ENCODE measurements at regions of chr10 and their contacts with region 1.

Region 1: DNA sequence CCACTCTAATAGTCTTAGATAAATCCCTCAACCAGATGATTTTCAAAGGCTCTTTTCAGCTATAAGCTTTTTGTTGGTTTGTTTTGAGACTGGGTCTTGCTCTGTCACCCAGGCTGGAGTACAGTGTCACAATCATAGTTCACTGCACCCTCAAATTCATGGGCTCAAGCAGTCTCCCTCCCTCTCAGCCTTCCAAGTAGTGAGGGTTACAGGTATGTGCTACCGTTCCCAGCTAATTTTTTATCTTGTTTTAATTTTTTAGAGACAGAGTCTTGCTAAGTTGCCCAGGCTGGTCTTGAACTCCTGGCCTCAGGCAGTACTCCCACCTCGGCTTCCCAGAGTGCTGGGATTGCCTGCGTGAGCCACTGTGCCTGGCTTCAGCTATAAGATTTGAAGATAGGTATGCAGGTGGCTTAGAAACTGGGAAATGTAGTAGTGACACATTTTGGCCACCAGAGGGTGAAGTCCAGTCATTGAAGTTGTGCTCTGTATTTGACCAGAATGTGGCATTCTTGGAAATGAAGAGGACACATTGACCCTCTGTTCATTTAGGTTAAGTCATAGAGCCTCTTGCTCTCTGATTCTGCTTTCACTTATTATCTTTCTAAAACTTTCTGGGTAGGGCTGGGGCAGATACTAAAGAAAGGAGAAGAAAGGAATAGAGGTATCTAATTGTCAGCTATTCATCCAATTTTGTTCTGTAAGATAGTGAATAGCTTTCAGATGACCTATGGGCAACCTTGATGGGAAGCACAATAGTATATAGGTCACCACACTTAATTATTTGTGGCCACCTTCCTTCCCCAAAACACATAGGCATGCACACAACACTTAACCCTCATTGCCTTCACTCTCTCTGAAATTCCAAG is 36.0 kb downstream of the R3HCC1L start:
- DNase-seq: no peak
- H3K4me3 ChIP-seq: no peak overlapping the region
- H3K27ac ChIP-seq: no peak overlapping the region
- H3K4me1 ChIP-seq: peaks cover 23% of the 10 kb centered on the region
- H3K27me3 ChIP-seq: no peaks in the 10 kb centered on the region
- CTCF ChIP-seq: peak; percentile 69 to 75 (median 74)
- POLR2A ChIP-seq: no peak

Region 2: DNA sequence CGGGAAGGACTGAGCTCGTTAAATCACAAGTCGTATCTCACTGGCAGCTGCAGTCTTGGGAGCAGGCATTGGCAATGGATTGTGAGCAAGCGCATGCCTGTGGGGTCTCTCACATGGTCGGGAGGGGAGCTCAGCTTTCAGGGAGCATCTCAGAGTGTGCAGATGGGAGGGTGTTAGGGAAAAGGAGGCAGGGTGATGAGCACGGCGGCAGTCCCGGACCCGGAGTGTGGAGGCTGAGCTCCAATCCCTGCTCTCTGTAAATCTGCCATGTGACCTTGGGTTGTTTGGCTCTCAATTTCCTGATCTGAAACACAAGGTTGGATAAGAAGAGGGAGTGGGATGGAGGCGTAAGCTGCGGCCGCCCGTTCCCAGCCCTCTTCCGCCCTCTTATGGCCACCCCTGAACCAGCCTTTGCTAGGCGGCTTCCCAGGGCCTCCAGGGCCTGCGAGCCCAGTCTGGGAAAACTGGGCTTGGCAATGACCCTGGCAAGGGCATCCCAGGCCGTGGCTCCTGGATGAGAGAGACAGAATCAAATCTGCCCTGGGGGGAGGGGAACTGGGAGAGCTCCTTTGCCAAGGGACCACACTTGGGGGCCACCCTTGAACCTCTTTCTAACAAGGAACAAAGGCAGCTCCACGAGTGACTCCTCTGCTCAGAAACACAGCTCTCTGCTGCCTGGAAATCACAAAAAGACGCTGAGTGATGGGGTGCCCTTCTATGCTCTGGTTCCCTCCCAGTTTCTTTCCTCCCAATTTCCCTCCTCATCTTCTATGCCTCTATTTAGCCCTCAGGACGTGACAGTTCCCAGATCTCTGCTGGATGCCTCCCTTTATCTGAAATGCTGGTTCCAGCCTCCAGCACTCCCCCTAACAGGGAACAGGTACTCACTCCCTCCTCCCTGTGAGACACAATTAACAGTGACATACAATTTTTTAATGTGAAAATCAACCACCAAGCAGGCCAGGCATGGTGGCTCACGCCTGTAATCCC is 139.2 kb after region 1 on chr10:
- intact Hi-C with region 1: loop called (anchors 5 kb)
- DNase-seq: no peak
- H3K4me3 ChIP-seq: peak overlapping the region; percentile 21 to 30
- H3K27ac ChIP-seq: peak overlapping the region; percentile 62
- H3K4me1 ChIP-seq: peaks cover 27% of the 10 kb centered on the region
- H3K27me3 ChIP-seq: no peaks in the 10 kb centered on the region
- CTCF ChIP-seq: peak; percentile 53 to 86 (median 82)
- POLR2A ChIP-seq: no peak

Region 3: GRCh38 chr10:98848361-98848760 is 677.9 kb after region 1 on chr10:
- intact Hi-C with region 1: loop called (anchors 5 kb)
- DNase-seq: no peak
- H3K4me3 ChIP-seq: no peak overlapping the region
- H3K27ac ChIP-seq: no peak overlapping the region
- H3K4me1 ChIP-seq: peaks cover 6% of the 10 kb centered on the region
- H3K27me3 ChIP-seq: no peaks in the 10 kb centered on the region
- CTCF ChIP-seq: no peak
- POLR2A ChIP-seq: no peak

Region 4: GRCh38 chr10:98899018-98899417 is 728.5 kb after region 1 on chr10:
- intact Hi-C with region 1: no loop called
- DNase-seq: no peak
- H3K4me3 ChIP-seq: no peak overlapping the region
- H3K27ac ChIP-seq: no peak overlapping the region
- H3K4me1 ChIP-seq: no peaks in the 10 kb centered on the region
- H3K27me3 ChIP-seq: no peaks in the 10 kb centered on the region
- CTCF ChIP-seq: no peak
- POLR2A ChIP-seq: no peak

Measured in vagina (tissue), 2 donors.